Posterior vena cava (tissue), 2 donors: ENCODE measurements at regions of chr13 and their contacts with region 1.

Region 1: GRCh38 chr13:106143930-106144709 is 391.3 kb downstream of the EFNB2 start:
- DNase-seq: no peak

Region 2: DNA sequence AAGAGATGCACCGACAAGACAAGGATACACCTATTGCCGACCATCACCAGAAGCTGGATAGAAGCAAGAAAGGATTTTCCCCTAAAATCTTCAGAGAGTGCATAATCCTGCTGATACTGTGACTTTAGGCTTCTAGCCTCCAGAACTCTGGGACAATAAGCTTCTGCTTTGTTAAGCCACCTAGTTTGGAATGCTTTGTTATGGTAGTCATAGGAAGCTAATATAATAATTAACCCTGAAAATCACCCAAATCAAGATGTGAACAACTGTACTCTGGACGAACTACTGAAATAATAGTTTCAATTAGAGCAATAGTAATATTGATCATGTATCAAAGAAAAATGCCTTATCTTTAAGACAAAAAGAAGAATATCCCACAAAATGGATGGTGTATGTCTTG is 133.3 kb before region 1 on chr13:
- intact Hi-C with region 1: no loop called
- DNase-seq: no peak

Region 3: DNA sequence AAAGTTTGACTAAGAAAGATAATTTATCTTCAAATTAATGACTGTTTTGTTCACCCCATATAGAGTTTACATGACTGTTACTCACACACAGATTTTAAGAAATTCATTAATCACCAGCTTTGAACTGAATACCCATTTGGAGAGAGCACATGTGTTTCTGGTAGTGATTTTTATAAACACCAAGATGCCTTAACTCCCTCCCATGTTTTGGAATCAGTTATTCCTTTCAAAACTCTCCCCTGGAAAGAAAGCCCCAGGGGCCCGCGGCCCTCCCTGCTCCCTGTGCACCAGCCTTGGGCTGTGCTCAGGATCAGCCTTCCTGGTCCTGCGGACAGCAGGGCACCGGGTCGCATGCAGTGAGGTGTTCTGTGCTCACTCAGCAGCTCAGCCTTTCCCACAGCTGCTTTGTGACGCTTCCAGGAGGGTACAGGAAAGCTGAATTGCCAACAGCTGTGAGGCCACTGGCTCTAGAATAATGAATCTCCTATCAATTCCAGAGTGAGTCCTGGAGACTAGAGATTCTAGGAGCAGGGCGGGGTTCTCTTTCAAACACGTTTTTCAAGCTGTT is 91.8 kb before region 1 on chr13:
- intact Hi-C with region 1: no loop called
- DNase-seq: no peak

Region 4: GRCh38 chr13:106182404-106182803 is 38.3 kb after region 1 on chr13:
- intact Hi-C with region 1: no loop called
- DNase-seq: no peak

Region 5: DNA sequence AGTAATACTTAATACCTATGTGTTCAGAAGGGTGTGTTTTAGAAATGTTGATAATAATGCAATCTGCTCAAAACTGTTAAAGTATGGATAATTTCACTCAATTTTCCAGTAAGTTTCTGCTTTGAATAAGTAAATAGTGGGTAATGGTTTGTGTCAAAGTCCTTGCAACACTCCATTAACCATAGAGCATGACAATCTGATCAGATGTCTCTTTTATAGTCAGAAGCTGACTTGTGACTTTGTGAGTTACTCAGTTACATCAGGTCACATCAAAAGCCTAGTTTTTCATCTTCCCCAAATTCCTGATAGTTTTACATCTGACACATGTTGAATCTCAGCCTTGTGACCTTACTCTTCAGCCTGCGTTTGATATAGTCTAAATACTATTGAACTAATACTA is 53.4 kb after region 1 on chr13:
- intact Hi-C with region 1: no loop called
- DNase-seq: no peak

Region 6: DNA sequence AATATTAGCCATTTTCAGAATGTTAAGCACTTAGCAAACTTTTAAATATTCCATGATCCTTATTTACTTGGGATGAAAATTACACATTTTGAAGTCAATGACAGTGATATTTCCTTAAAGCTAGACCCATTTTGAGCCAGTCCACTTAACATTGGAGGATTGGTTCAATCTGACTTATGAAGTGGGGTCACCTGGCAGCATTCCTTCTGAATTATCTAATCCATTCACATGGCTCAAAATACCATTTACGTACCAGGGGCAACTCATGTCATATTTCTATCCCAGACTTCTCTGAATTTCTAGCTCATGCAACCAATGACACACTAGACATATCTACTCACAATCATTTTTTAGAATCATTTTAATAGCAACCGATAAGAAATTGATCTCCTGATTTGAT is 78.4 kb after region 1 on chr13:
- intact Hi-C with region 1: loop called in 1 of 2 experiments (anchors 2 kb)
- DNase-seq: no peak

Region 7: GRCh38 chr13:107025978-107026377 is 881.9 kb after region 1 on chr13:
- intact Hi-C with region 1: loop called in 1 of 2 experiments (anchors 5 kb)
- DNase-seq: peak; percentile 92